ENCODE measurements at regions of chr12 and their contacts with region 1.

Region 1: GRCh38 chr12:54379401-54380201 is 4.9 kb downstream of the ZNF385A start:
- DNase-seq: peak; percentile 83
- H3K4me3 ChIP-seq: peak overlapping the region in 2 of 3 experiments; percentile 10 to 47
- H3K27ac ChIP-seq: no peak overlapping the region
- H3K4me1 ChIP-seq: peaks cover 4% of the 10 kb centered on the region
- H3K27me3 ChIP-seq: no peaks in the 10 kb centered on the region
- CTCF ChIP-seq: peak; percentile 100
- POLR2A ChIP-seq: no peak

Region 2: DNA sequence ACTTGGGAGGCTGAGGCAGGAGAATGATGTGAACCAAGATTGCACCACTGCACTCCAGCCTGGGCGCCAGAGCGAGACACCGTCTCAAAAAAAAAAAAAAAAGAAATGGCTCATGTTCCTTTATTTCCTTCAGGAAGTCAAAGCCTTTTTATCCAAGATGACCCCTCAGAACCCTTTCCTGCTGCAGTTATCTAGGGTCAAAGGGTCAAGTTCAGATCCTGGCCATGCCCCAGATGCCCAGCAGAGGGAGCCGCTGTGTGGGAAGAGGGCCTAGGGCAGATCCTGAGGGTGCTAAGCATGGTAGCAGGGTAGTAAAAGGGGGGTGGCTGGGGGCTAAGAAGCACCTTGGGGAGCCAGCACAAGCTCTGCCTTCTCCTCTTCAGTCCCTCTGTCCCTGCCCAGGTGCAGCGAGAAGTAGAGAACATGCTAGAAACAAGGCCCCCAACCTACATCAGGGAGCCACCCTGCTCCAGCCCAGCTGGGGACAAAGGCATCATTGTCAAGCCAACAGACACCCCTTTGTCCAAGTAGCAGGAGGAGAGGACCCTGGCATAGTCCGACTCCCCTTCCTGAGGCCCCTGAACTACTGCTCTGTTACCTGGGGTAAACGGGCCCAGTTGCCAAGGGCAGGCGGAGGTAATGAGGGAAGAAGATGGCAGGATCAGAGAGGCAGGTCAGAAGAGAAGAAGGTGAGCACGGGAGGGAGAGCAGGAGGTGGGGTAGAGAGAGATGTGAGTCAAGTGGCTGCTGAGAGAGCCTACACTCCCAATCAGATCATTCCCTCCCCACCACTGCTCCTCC is 85.2 kb before region 1 on chr12:
- CTCF ChIA-PET with region 1: interaction called, 34 read pairs
- POLR2A ChIA-PET with region 1: no interaction called
- dilution Hi-C with region 1: no loop called
- intact Hi-C with region 1: no loop called
- DNase-seq: peak; percentile 53
- H3K4me3 ChIP-seq: no peak overlapping the region
- H3K27ac ChIP-seq: no peak overlapping the region
- H3K4me1 ChIP-seq: no peaks in the 10 kb centered on the region
- H3K27me3 ChIP-seq: peaks cover 4 to 6% of the 10 kb centered on the region in 2 experiments
- CTCF ChIP-seq: peak; percentile 71 to 74
- POLR2A ChIP-seq: no peak

Region 3: DNA sequence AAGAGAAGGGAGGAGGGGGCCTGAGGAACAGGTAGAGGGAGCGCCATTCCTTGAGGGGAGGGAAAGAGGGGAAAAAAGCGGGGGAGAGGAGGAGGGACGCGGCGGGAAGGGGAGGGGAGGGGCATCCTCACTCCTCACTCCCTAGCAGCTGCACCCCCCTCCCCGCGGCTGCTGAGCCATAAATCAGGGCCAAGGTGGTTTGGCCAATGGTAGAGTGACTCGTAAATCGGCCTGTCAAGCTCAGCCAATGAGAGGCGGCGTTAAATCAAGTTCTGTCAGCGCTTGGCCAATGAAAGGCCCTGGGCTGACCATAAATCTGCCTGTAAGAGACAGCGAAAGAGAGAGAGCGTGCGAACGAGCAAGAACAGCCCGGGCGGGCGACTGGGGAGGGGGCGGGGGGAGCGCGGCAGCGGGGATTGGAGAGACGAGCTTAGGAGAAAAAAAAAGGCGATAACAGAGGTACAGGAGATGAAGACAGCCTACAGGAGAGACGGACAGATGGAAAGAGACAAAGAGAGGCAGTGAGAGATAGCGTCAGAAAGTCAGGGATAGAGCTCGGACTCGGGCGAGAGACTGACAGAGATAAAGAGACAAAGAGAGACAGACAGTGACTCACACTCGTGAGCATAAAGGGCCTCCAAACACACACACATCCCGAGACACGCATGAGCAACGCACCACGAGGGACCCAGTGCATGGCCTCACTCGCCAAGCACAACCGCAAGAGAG is 20.4 kb before region 1 on chr12:
- CTCF ChIA-PET with region 1: interaction called, 18 read pairs
- POLR2A ChIA-PET with region 1: no interaction called
- dilution Hi-C with region 1: no loop called
- intact Hi-C with region 1: no loop called
- DNase-seq: peak; percentile 99
- H3K4me3 ChIP-seq: peak overlapping the region; percentile 27 to 69 (median 69)
- H3K27ac ChIP-seq: peak overlapping the region; percentile 82
- H3K4me1 ChIP-seq: peaks cover 27% of the 10 kb centered on the region
- H3K27me3 ChIP-seq: no peaks in the 10 kb centered on the region
- CTCF ChIP-seq: no peak
- POLR2A ChIP-seq: peak; percentile 78

Region 4: GRCh38 chr12:54398995-54399793 is 19.6 kb after region 1 on chr12:
- CTCF ChIA-PET with region 1: interaction called, 32 read pairs
- POLR2A ChIA-PET with region 1: interaction called, 3 read pairs
- dilution Hi-C with region 1: no loop called
- intact Hi-C with region 1: no loop called
- DNase-seq: peak; percentile 86
- H3K4me3 ChIP-seq: no peak overlapping the region
- H3K27ac ChIP-seq: no peak overlapping the region
- H3K4me1 ChIP-seq: no peaks in the 10 kb centered on the region
- H3K27me3 ChIP-seq: no peaks in the 10 kb centered on the region
- CTCF ChIP-seq: peak; percentile 94 to 98
- POLR2A ChIP-seq: peak; percentile 58

Region 5: DNA sequence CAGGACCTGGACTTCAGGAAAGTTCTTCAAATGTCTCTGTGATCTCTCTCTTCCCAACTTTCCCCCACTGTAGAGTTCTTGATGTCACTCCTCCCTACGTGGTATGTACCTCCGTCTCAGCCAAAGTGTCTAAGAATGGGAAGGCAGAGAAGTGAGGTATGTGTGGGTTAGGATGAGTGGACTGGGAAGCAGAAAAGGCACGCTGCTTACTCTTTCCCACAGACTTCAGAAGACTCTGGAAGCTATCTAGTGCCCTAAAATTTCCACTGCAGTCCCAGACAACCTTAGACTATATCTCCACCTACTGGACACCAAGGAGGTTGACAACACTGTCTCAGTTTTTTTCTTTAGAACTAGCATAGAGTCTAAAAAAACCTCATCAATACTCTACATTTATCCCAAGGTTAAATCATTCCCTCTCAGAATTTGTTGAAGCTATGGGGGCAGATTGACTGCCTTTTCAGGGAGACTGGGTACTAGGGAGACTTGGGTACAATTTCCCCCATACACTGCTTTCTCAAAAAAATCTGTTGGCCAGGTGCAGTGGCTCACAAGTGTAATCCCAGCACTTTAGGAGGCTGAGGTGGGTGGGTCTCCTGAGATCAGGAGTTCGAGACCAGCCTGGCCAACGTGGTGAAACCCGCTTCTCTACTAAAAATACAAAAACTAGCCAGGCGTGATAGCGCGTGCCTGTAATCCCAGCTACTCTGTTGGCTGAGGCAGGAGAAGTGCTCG is 60.1 kb after region 1 on chr12:
- CTCF ChIA-PET with region 1: interaction called, 22 read pairs
- POLR2A ChIA-PET with region 1: no interaction called
- dilution Hi-C with region 1: no loop called
- intact Hi-C with region 1: loop called (anchors 1 kb)
- DNase-seq: peak; percentile 77
- H3K4me3 ChIP-seq: no peak overlapping the region
- H3K27ac ChIP-seq: peak overlapping the region; percentile 6
- H3K4me1 ChIP-seq: peaks cover 7% of the 10 kb centered on the region
- H3K27me3 ChIP-seq: no peaks in the 10 kb centered on the region
- CTCF ChIP-seq: peak; percentile 62 to 64
- POLR2A ChIP-seq: no peak

Region 6: DNA sequence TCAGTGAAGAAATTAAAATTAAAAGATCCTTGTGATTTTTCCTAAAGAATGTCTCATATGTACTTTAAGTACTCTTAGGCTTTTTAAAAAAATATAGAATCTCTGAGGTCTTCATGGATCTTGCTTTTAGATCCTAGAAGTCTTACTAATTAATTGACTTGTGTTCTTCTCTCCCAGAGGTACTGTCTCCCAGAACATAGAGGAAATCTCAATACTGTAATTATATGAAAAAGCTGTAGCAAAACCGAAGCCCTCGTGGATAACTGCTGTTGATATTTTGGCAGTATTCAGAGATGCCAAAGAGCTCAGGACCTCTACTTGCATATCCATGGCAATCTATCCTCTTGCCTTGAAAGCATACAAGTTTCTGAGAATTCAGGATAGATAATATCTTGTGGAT is 746.5 kb after region 1 on chr12 and contains the start of gene OR9K2:
- CTCF ChIA-PET with region 1: no interaction called
- POLR2A ChIA-PET with region 1: no interaction called
- dilution Hi-C with region 1: no loop called
- intact Hi-C with region 1: no loop called
- DNase-seq: no peak
- H3K4me3 ChIP-seq: no peak within 1 kb of the TSS
- H3K27ac ChIP-seq: no peak within 1 kb of the TSS
- H3K4me1 ChIP-seq: no peaks in the 10 kb centered on the region
- H3K27me3 ChIP-seq: no peaks in the 10 kb centered on the region
- CTCF ChIP-seq: no peak
- POLR2A ChIP-seq: no peak
- total RNA-seq, gene OR9K2: not detected in 2 replicates